Naive thymus-derived CD4-positive, alpha-beta T cell (primary cell): ENCODE measurements at regions of chr7 and their contacts with region 1.

Region 1: DNA sequence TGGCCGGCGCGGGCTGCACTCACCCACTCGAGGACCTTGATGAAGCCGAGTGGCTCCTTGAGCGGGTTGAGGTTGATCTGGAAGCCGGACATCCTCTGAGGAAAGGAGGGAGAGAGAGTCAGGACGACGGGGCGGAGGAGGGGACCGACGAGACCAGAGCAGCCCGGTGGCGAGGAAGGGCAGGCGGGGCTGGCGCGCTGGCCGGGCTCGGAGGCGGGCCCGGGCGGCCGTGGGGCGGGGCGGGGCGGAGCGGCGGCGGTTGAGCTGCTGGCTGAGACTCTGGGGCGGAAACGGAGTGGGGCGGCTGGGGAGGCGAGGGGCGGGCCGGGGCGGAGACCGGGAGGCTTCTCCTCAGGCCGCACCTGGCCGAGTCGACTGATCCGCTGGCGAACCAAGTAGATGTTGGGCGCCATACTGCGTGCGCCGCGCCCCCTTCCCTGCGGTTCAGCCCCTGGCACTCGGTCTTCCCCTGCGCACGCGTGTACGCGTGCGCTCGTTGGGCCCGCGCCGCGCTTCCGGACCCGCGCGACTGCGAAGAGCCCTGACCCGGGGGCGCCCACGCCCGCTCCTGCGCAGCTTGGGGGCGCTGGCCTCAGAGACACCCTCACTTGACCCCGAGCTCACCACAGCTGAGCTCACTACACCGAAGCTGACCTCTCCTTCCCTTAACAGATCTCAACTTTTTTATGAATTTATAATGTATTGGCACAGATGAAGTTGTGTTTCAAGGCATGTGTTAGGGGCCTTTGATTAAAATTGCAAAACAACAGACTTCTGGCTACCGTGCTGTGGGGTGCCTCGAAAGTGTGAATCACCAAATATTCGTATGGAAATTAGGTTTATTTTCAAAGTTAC is at the start of gene SYPL1:
- DNase-seq: peak; percentile 91 to 95 (median 93)
- ATAC-seq: peak; percentile 93
- H3K4me3 ChIP-seq: peak within 1 kb of the TSS; percentile 70
- H3K4me3 Mint-ChIP-seq: peak within 1 kb of the TSS; percentile 78 to 97 (median 92)
- H3K27ac ChIP-seq: peak within 1 kb of the TSS; percentile 83
- H3K27ac Mint-ChIP-seq: peak within 1 kb of the TSS; percentile 90 to 99 (median 96)
- H3K4me1 ChIP-seq: peaks cover 14 to 64% of the 10 kb centered on the region in 2 donors
- H3K4me1 Mint-ChIP-seq: peaks cover 45 to 82% (median 71%) of the 10 kb centered on the region in 7 donors
- H3K27me3 ChIP-seq: no peaks in the 10 kb centered on the region
- H3K27me3 Mint-ChIP-seq: peaks cover 0 to 4% (median 0%) of the 10 kb centered on the region in 5 donors
- total RNA-seq, gene SYPL1: 37.5 to 54.0 (median 46.6) TPM

Region 2: DNA sequence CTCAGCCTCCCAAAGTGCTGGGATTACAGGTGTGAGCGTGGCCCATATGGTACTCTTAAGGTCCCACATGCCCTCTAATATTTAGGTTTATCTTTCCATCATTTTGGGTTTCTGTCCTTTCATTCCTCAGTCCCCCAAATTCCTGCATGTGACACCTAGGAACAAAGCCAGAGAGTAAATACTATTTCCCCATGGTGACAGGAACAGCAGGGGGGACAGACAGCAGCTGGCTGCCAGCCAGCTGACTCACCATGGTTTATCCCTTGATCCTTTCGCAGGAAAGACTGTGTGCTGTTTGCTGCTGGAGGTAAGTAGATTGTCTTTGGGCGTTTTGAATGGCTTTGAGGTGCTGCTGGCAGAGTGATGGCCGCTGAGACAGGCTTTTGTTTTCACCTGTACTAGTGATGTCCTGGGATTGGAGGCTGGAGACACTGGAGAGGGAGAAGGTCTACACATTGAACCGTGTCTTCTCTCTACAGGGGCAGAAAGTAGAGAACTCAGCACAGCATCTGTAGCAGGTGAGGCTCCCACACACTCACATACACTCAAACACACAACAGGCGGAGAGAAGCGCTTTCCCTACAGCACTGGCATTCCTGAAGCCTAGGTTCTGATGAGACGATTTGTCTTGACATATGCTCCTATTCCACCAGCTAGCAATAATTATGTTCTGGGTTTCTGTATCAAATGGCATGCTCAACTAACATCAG is 447.4 kb before region 1 on chr7:
- CTCF ChIA-PET with region 1: no interaction called
- POLR2A ChIA-PET with region 1: no interaction called
- intact Hi-C with region 1: no loop called
- DNase-seq: no peak
- ATAC-seq: no peak
- H3K4me3 ChIP-seq: no peak overlapping the region
- H3K4me3 Mint-ChIP-seq: no peak overlapping the region
- H3K27ac ChIP-seq: no peak overlapping the region
- H3K27ac Mint-ChIP-seq: peak overlapping the region in 2 of 9 donors; percentile 45 to 86
- H3K4me1 ChIP-seq: no peaks in the 10 kb centered on the region
- H3K4me1 Mint-ChIP-seq: peaks cover 3 to 27% (median 10%) of the 10 kb centered on the region in 7 donors
- H3K27me3 ChIP-seq: no peaks in the 10 kb centered on the region
- H3K27me3 Mint-ChIP-seq: no peaks in the 10 kb centered on the region

Region 3: DNA sequence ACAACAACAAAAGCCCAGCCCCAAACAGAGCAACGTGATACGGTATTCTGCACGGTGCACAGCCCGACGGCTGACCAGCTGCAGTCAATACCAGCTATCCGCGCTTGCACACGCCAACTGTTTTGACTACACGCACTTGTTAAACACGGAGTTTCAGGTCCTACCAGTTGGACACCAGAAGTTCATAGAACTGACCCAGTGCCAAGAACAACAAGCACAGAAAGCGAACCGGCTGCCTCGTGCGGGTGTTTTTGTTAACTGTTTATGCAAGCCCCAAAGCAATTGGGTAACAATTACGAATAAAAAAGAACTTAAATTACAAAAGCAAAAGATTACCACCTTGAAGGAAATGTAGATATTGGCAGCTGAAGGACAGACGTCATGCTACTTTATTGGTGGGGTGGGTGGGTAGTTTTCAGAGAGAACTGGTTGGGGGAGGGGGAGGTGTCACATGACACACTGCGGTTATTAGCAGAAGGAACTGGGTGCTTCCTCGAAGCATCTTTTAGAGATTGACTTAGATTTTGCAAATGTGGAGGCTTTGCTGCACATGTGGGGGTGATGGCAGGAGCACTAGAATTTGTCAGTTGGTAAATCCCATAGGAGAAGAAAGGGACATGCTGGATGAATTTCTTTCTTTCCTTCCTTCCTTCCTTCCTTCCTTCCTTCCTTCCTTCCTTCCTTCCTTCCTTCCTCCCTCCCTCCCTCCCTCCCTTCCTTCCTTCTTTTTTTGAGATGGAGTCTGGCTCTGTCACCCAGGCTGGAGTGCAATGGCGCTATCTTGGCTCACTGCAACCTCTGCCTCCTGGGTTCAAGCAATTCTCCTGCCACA is 420.4 kb before region 1 on chr7:
- CTCF ChIA-PET with region 1: no interaction called
- POLR2A ChIA-PET with region 1: interaction called, 8 read pairs
- intact Hi-C with region 1: loop called (anchors 5 kb)
- DNase-seq: peak; percentile 22 to 94 (median 90)
- ATAC-seq: peak; percentile 89
- H3K4me3 ChIP-seq: peak overlapping the region; percentile 94
- H3K4me3 Mint-ChIP-seq: peak overlapping the region; percentile 84 to 98 (median 92)
- H3K27ac ChIP-seq: peak overlapping the region; percentile 83
- H3K27ac Mint-ChIP-seq: peak overlapping the region; percentile 95 to 100 (median 99)
- H3K4me1 ChIP-seq: peaks cover 19 to 21% of the 10 kb centered on the region in 2 donors
- H3K4me1 Mint-ChIP-seq: peaks cover 33 to 78% (median 65%) of the 10 kb centered on the region in 7 donors
- H3K27me3 ChIP-seq: no peaks in the 10 kb centered on the region
- H3K27me3 Mint-ChIP-seq: no peaks in the 10 kb centered on the region

Region 4: GRCh38 chr7:106022193-106022821 is 90.0 kb before region 1 on chr7:
- CTCF ChIA-PET with region 1: no interaction called
- POLR2A ChIA-PET with region 1: interaction called, 6 read pairs
- intact Hi-C with region 1: loop called in 1 of 2 experiments (anchors 1 kb)
- DNase-seq: peak; percentile 38 to 96 (median 93)
- ATAC-seq: peak; percentile 89
- H3K4me3 ChIP-seq: peak overlapping the region; percentile 23
- H3K4me3 Mint-ChIP-seq: peak overlapping the region; percentile 43 to 82 (median 68)
- H3K27ac ChIP-seq: peak overlapping the region; percentile 87
- H3K27ac Mint-ChIP-seq: peak overlapping the region; percentile 86 to 99 (median 98)
- H3K4me1 ChIP-seq: peaks cover 30 to 76% of the 10 kb centered on the region in 2 donors
- H3K4me1 Mint-ChIP-seq: peaks cover 23 to 89% (median 85%) of the 10 kb centered on the region in 7 donors
- H3K27me3 ChIP-seq: no peaks in the 10 kb centered on the region
- H3K27me3 Mint-ChIP-seq: peaks cover 0 to 15% (median 0%) of the 10 kb centered on the region in 5 donors

Region 5: DNA sequence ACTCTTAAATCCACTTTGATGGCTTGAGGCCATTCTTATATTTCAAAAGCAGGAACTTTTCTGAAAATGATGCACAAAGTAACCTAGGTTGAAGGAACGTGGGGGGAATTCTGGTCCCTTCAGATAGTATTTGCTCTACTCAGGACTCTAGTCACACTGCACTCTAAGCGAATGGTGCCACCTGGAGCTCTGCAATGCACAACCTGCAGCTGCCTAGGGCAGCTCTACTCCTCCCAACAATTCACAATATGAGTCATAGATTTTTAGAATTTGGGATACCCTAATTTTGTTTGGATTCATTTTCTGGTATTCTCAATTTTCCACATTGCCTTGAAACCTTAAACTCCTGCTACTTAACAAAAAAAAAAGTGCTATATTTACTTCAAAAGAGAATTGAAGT is 17.5 kb before region 1 on chr7:
- CTCF ChIA-PET with region 1: interaction called, 3 read pairs
- POLR2A ChIA-PET with region 1: interaction called, 22 read pairs
- intact Hi-C with region 1: loop called in 1 of 2 experiments (anchors 2 kb)
- DNase-seq: no peak
- ATAC-seq: no peak
- H3K4me3 ChIP-seq: no peak overlapping the region
- H3K4me3 Mint-ChIP-seq: no peak overlapping the region
- H3K27ac ChIP-seq: no peak overlapping the region
- H3K27ac Mint-ChIP-seq: peak overlapping the region in 2 of 9 donors; percentile 15 to 68
- H3K4me1 ChIP-seq: no peaks in the 10 kb centered on the region
- H3K4me1 Mint-ChIP-seq: peaks cover 4 to 19% (median 11%) of the 10 kb centered on the region in 7 donors
- H3K27me3 ChIP-seq: no peaks in the 10 kb centered on the region
- H3K27me3 Mint-ChIP-seq: no peaks in the 10 kb centered on the region

Region 6: GRCh38 chr7:106153891-106154449 is 41.6 kb after region 1 on chr7:
- CTCF ChIA-PET with region 1: interaction called, 9 read pairs
- POLR2A ChIA-PET with region 1: interaction called, 22 read pairs
- intact Hi-C with region 1: loop called in 1 of 2 experiments (anchors 1 kb)
- DNase-seq: peak; percentile 51 to 76 (median 66)
- ATAC-seq: peak; percentile 95
- H3K4me3 ChIP-seq: no peak overlapping the region
- H3K4me3 Mint-ChIP-seq: peak overlapping the region in 8 of 10 donors; percentile 7 to 76 (median 58)
- H3K27ac ChIP-seq: no peak overlapping the region
- H3K27ac Mint-ChIP-seq: peak overlapping the region in 1 of 9 donors; percentile 82
- H3K4me1 ChIP-seq: peaks cover 0 to 8% of the 10 kb centered on the region in 2 donors
- H3K4me1 Mint-ChIP-seq: peaks cover 0 to 13% (median 8%) of the 10 kb centered on the region in 7 donors
- H3K27me3 ChIP-seq: peaks cover 0 to 4% of the 10 kb centered on the region in 2 donors
- H3K27me3 Mint-ChIP-seq: peaks cover 0 to 33% (median 22%) of the 10 kb centered on the region in 5 donors

Region 7: GRCh38 chr7:106865130-106866041 is 753.0 kb after region 1 on chr7 and contains the start of gene PIK3CG:
- CTCF ChIA-PET with region 1: no interaction called
- POLR2A ChIA-PET with region 1: no interaction called
- intact Hi-C with region 1: loop called (anchors 5 kb)
- DNase-seq: peak in 7 of 9 donors; percentile 43 to 77 (median 70)
- ATAC-seq: peak; percentile 96
- H3K4me3 ChIP-seq: peak within 1 kb of the TSS; percentile 62
- H3K4me3 Mint-ChIP-seq: peak within 1 kb of the TSS; percentile 86 to 98 (median 94)
- H3K27ac ChIP-seq: peak within 1 kb of the TSS; percentile 75
- H3K27ac Mint-ChIP-seq: peak within 1 kb of the TSS; percentile 90 to 96 (median 95)
- H3K4me1 ChIP-seq: peaks cover 50% of the 10 kb centered on the region in 2 donors
- H3K4me1 Mint-ChIP-seq: peaks cover 44 to 85% (median 72%) of the 10 kb centered on the region in 7 donors
- H3K27me3 ChIP-seq: no peaks in the 10 kb centered on the region
- H3K27me3 Mint-ChIP-seq: no peaks in the 10 kb centered on the region
- total RNA-seq, gene PIK3CG: 25.1 to 54.9 (median 30.6) TPM